ENCODE measurements at regions of chr2 and their contacts with region 1.

Region 1: GRCh38 chr2:38602732-38603401 is at the start of gene HNRNPLL:
- DNase-seq: peak; percentile 98
- H3K4me3 Mint-ChIP-seq: peak within 1 kb of the TSS; percentile 82
- H3K27ac Mint-ChIP-seq: peak within 1 kb of the TSS; percentile 94
- H3K4me1 Mint-ChIP-seq: peaks cover 18% of the 10 kb centered on the region
- H3K27me3 Mint-ChIP-seq: no peaks in the 10 kb centered on the region
- CTCF ChIP-seq: no peak
- total RNA-seq, gene HNRNPLL: 43.4 and 57.7 TPM in 2 replicates

Region 2: GRCh38 chr2:38581193-38582147 is 21.4 kb before region 1 on chr2:
- CTCF ChIA-PET with region 1: interaction called, 85 read pairs
- POLR2A ChIA-PET with region 1: interaction called, 73 read pairs
- intact Hi-C with region 1: no loop called
- DNase-seq: peak; percentile 77
- H3K4me3 Mint-ChIP-seq: no peak overlapping the region
- H3K27ac Mint-ChIP-seq: no peak overlapping the region
- H3K4me1 Mint-ChIP-seq: peaks cover 5% of the 10 kb centered on the region
- H3K27me3 Mint-ChIP-seq: no peaks in the 10 kb centered on the region
- CTCF ChIP-seq: peak; percentile 56

Region 3: GRCh38 chr2:38590053-38590452 is 12.8 kb before region 1 on chr2:
- CTCF ChIA-PET with region 1: interaction called, 4 read pairs
- POLR2A ChIA-PET with region 1: interaction called, 73 read pairs
- intact Hi-C with region 1: no loop called
- DNase-seq: no peak
- H3K4me3 Mint-ChIP-seq: no peak overlapping the region
- H3K27ac Mint-ChIP-seq: no peak overlapping the region
- H3K4me1 Mint-ChIP-seq: peaks cover 12% of the 10 kb centered on the region
- H3K27me3 Mint-ChIP-seq: no peaks in the 10 kb centered on the region
- CTCF ChIP-seq: no peak

Region 4: GRCh38 chr2:38615237-38615636 is 12.4 kb after region 1 on chr2:
- CTCF ChIA-PET with region 1: interaction called, 20 read pairs
- POLR2A ChIA-PET with region 1: interaction called, 43 read pairs
- intact Hi-C with region 1: no loop called
- DNase-seq: no peak
- H3K4me3 Mint-ChIP-seq: no peak overlapping the region
- H3K27ac Mint-ChIP-seq: no peak overlapping the region
- H3K4me1 Mint-ChIP-seq: peaks cover 6% of the 10 kb centered on the region
- H3K27me3 Mint-ChIP-seq: no peaks in the 10 kb centered on the region
- CTCF ChIP-seq: no peak

Region 5: GRCh38 chr2:38665854-38666555 is 63.1 kb after region 1 on chr2 and contains the start of gene GALM:
- CTCF ChIA-PET with region 1: no interaction called
- POLR2A ChIA-PET with region 1: interaction called, 11 read pairs
- intact Hi-C with region 1: no loop called
- DNase-seq: no peak
- H3K4me3 Mint-ChIP-seq: no peak within 1 kb of the TSS
- H3K27ac Mint-ChIP-seq: no peak within 1 kb of the TSS
- H3K4me1 Mint-ChIP-seq: peaks cover 9% of the 10 kb centered on the region
- H3K27me3 Mint-ChIP-seq: peaks cover 13% of the 10 kb centered on the region
- CTCF ChIP-seq: no peak
- total RNA-seq, gene GALM: not detected in 2 replicates

Region 6: DNA sequence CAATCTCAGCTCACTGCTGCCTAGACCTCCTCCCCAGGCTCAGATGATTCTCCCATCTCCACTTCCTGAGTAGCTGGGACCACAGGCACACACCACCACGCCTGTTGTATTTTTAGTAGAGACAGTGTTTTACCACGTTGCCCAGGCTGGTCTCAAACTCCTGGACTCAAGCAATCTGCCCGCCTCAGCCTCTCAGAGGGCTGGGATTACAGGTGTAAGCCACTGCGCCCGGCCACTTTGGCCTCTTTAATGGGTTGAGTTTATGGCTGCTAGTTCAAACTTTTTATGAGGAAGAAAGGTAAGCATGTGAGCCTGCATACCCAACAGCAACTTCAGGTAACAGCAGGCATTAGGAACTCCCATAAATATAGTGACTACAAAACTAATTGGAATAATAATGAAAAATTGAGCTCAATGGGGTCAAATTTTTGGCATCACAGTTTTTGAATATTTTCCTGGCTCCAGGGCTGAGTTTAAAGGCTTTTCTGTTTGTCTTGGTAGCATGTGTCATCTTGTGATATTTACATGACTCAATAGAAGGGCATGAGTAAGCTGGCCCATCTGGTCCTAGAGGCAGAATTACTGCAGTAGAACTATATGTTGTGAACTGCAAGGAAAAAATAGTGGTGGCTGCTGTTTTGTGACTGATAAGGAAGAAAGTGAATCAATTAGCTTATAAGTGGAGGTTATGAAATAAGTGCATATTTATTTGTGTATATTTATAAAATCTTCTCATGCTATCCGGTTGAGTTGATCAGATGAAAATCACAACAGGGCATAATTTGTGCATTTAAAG is 87.8 kb after region 1 on chr2:
- CTCF ChIA-PET with region 1: interaction called, 7 read pairs
- POLR2A ChIA-PET with region 1: interaction called, 38 read pairs
- intact Hi-C with region 1: no loop called
- DNase-seq: peak; percentile 84
- H3K4me3 Mint-ChIP-seq: no peak overlapping the region
- H3K27ac Mint-ChIP-seq: peak overlapping the region; percentile 86
- H3K4me1 Mint-ChIP-seq: peaks cover 25% of the 10 kb centered on the region
- H3K27me3 Mint-ChIP-seq: no peaks in the 10 kb centered on the region
- CTCF ChIP-seq: no peak

Region 7: GRCh38 chr2:38720613-38721241 is 117.9 kb after region 1 on chr2:
- CTCF ChIA-PET with region 1: interaction called, 69 read pairs
- POLR2A ChIA-PET with region 1: interaction called, 38 read pairs
- intact Hi-C with region 1: loop called (anchors 1 kb)
- DNase-seq: peak; percentile 97
- H3K4me3 Mint-ChIP-seq: no peak overlapping the region
- H3K27ac Mint-ChIP-seq: peak overlapping the region; percentile 36
- H3K4me1 Mint-ChIP-seq: peaks cover 19% of the 10 kb centered on the region
- H3K27me3 Mint-ChIP-seq: no peaks in the 10 kb centered on the region
- CTCF ChIP-seq: no peak

Measured in MCF 10A (cell line).